ENCODE measurements at regions of chr5 and their contacts with region 1.

Region 1: DNA sequence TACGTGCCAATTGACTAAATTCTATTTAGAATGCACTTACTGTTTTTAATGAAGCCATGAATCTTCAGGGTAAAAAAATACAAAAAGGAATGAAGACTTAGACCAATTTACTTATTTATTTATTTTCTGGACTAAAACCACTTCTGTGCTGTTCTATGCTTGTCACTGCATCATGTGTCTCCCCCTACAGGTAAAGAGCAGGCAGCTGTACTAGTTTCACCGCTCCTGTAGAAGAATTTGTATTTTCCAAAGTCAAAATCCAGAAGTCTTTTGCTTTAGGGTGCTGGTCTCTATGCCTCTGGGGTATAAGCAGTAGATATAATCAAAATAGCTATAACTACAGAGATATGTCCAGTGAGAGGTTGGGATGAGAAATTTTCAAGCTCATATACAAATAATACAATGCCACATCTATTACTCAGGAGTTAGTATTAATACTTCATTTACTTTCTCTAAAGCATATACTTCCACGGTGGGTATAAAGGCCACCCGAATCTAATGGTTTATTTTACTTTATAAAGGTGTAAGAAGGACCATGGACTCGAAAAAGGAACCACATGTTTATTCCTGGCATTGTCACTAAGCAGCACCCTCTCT is 591.5 kb downstream of the RAB3C start:
- DNase-seq: no peak
- ATAC-seq: peak; percentile 66
- H3K4me3 Mint-ChIP-seq: peak overlapping the region; percentile 1
- H3K27ac Mint-ChIP-seq: no peak overlapping the region
- H3K4me1 Mint-ChIP-seq: peaks cover 33% of the 10 kb centered on the region
- H3K27me3 Mint-ChIP-seq: no peaks in the 10 kb centered on the region

Region 2: GRCh38 chr5:59039296-59040023 is 134.9 kb before region 1 on chr5:
- POLR2A ChIA-PET with region 1: interaction called, 12 read pairs
- DNase-seq: peak; percentile 92
- ATAC-seq: peak; percentile 78
- H3K4me3 Mint-ChIP-seq: peak overlapping the region; percentile 90
- H3K27ac Mint-ChIP-seq: peak overlapping the region; percentile 98
- H3K4me1 Mint-ChIP-seq: peaks cover 30% of the 10 kb centered on the region
- H3K27me3 Mint-ChIP-seq: no peaks in the 10 kb centered on the region

Measured in activated naive CD8-positive, alpha-beta T cell treated with anti-CD3 and anti-CD28 coated beads, Interleukin-2, amount 10 ng/mL, durations not matched to agents 7 days and 5 days (primary cell).